ENCODE measurements at regions of chr11 and their contacts with region 1.

Region 1: GRCh38 chr11:78310500-78310909 is 107.1 kb downstream of the GAB2 start:
- DNase-seq: peak; percentile 16 to 84
- H3K4me3 ChIP-seq: peak overlapping the region; percentile 9 to 12
- H3K27ac ChIP-seq: peak overlapping the region; percentile 74 to 79
- H3K4me1 ChIP-seq: peaks cover 18 to 51% of the 10 kb centered on the region in 2 donors
- H3K27me3 ChIP-seq: no peaks in the 10 kb centered on the region
- CTCF ChIP-seq: no peak

Region 2: DNA sequence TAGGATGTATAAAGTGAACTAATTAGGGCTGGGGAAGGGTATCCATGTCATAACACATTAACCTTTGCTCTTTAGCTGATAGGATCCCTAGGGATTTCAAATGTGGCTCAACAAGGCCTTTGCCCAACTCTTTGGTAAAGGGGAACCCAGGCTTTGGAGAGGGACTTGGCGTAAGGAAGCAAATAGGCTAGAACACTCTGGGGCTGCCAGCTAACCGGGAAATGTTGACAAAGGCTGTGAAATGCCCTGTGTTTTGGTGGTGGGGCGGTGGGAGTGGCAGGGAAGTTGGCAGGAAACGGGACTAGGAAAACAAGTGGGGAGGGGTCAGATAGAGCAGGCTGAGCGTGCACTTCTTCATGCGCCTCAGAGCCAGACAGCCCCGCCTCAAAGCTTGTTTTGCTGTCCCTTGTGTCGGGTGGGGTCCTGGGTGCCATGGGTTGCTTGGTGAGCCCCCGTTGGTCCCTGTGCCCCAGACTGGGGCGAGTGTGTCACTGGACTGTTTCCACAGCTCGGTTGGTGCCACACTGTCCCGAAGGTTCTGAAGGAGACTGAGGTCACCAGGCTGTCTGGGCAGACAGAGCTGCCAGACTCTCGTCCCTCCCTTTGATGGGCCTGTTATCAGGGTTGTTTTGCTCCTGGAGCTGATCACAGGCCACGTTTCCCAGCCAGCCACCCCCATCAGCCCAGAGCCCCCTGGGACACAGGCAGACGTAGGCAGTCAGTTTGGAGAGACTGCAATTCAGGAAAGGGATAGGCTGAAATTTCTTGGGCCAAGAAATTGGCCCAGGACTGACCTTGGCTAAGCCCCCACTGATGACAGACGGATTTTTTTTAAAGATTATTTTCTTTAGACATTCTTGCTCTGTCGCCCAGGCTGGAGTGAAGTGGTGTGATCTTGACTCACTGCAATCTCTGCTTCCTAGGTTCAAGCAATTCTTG is 141.7 kb before region 1 on chr11:
- intact Hi-C with region 1: loop called (anchors 5 kb)
- DNase-seq: peak; percentile 87 to 98
- H3K4me3 ChIP-seq: no peak overlapping the region
- H3K27ac ChIP-seq: peak overlapping the region; percentile 96
- H3K4me1 ChIP-seq: peaks cover 6 to 46% of the 10 kb centered on the region in 2 donors
- H3K27me3 ChIP-seq: no peaks in the 10 kb centered on the region
- CTCF ChIP-seq: no peak

Region 3: GRCh38 chr11:78228467-78228866 is 82.0 kb before region 1 on chr11:
- intact Hi-C with region 1: loop called (anchors 2 kb)
- DNase-seq: peak in 1 of 2 donors; percentile 61
- H3K4me3 ChIP-seq: no peak overlapping the region
- H3K27ac ChIP-seq: peak overlapping the region in 1 of 2 donors; percentile 31
- H3K4me1 ChIP-seq: peaks cover 0 to 20% of the 10 kb centered on the region in 2 donors
- H3K27me3 ChIP-seq: no peaks in the 10 kb centered on the region
- CTCF ChIP-seq: peak; percentile 21 to 59 (median 26)

Region 4: DNA sequence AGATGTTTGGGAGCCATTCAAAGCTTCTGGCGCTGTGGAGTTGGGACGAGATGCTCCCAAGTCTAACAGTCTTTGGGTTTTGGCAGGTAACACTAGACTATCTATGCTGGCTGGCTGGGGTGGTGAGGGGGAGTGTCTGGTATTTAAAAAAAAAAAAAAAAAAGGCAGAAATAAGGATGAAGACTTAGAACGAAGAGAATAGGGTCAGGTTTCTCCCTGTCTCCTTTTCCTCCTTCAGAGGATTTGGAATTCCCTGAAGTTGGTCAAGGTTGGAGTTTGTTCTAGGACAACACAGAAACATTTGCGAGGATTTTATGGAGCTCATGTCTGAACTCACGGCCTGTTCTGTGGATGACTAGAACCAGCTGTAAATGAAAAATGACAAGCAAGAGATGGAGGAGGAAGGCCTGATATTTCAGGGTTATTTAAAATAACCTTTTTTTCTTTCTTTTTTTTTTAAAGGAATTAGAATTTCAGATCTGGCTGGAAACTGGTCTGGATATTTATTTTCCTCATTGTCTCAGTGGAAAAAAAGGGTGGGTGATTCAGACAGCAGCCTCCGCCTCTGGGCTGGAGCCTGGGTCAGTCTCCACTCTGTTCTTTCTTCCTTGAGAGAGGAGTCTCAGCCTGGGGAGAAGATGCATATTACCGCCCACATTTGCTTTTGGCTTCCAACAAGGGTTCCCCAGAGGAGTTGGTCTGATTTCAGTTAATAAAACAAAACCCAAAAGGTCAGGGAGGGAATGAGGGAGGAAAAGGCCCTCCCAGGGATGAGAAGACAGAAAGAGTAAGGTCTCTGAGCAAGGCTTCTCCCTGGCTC is 41.7 kb before region 1 on chr11:
- intact Hi-C with region 1: loop called (anchors 5 kb)
- DNase-seq: peak in 1 of 2 donors; percentile 74
- H3K4me3 ChIP-seq: no peak overlapping the region
- H3K27ac ChIP-seq: peak overlapping the region; percentile 82 to 87
- H3K4me1 ChIP-seq: peaks cover 0 to 30% of the 10 kb centered on the region in 2 donors
- H3K27me3 ChIP-seq: no peaks in the 10 kb centered on the region
- CTCF ChIP-seq: no peak

Region 5: GRCh38 chr11:78574386-78575381 is 264.2 kb after region 1 on chr11 and contains the start of gene NARS2:
- intact Hi-C with region 1: loop called (anchors 5 kb)
- DNase-seq: peak; percentile 94 to 99
- H3K4me3 ChIP-seq: peak within 1 kb of the TSS; percentile 84 to 95
- H3K27ac ChIP-seq: peak within 1 kb of the TSS; percentile 83 to 91
- H3K4me1 ChIP-seq: peaks cover 0 to 10% of the 10 kb centered on the region in 2 donors
- H3K27me3 ChIP-seq: no peaks in the 10 kb centered on the region
- CTCF ChIP-seq: no peak
- total RNA-seq, gene NARS2: 7.8 TPM